K562 (cell line): ENCODE measurements at regions of chr1 and their contacts with region 1.

Region 1: DNA sequence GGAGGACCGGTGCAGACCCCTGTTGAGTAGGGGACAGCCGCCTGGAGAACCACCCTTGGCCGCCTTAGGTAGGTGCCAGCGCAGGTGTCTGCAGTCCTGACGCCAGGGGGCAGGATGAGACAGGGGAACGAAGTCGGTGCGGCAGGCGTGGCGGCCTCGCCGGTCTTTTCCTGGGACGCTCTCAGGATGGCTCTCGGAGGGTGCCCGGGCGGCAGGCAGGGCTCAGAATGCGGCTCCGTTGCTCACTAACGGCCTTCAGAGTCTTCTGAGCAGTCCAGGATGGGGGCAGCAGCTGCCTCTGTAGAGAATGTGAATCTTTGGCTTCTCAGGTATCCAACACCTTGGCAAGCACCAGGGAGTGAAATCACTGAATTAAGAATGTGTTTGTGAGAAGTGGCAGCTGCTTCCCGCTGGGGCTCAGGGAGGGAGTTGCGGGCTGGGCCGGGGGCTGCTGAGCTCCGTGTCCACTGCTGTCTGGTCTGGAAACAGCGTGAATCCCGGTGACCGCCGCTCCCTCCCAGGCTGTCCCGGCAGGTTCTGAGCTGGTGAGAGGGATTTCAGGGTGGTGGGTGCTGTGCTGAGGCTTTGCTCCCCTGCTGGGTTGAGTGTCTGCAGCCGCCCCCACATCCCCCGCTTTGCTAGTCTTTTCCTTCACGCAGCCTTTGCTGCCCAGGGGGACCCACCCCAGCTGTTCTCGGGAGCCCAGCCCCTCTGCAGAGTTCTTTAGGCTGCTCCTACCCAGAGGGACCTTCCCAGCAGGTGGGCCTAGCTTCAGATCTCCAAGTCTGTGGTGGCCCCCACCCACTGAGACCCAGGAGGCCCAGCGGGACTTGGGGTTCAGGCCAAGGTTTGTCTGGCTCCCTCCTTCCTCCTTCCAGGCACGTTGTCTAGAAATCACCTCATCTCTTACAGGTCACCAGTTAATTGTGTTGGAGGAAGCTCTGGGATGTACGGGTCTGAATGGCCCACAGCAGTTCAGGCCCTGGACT is 11.1 kb upstream of the C1orf174 start:
- DNase-seq: peak; percentile 84 to 85 (median 84)
- ATAC-seq: peak; percentile 87
- H3K4me3 ChIP-seq: no peak overlapping the region
- H3K27ac ChIP-seq: no peak overlapping the region
- H3K4me1 ChIP-seq: peaks cover 10 to 64% of the 10 kb centered on the region in 2 experiments; a peak in 3 of 5 replicates
- H3K27me3 ChIP-seq: peaks cover 13 to 42% of the 10 kb centered on the region in 2 experiments
- CTCF ChIP-seq: peak; percentile 88 to 94 (median 90)
- EP300 ChIP-seq: no peak
- POLR2A ChIP-seq: no peak
- RAD21 ChIP-seq: peak; percentile 70 to 94

Region 2: GRCh38 chr1:3785456-3786157 is 125.5 kb before region 1 on chr1:
- CTCF ChIA-PET with region 1: interaction called, 7 read pairs
- POLR2A ChIA-PET with region 1: interaction called, 3 read pairs
- in situ Hi-C with region 1: no loop called
- intact Hi-C with region 1: loop called (anchors 1 kb)
- DNase-seq: peak; percentile 65 to 74 (median 70)
- ATAC-seq: peak; percentile 91
- H3K4me3 ChIP-seq: no peak overlapping the region
- H3K27ac ChIP-seq: no peak overlapping the region
- H3K4me1 ChIP-seq: peaks cover 0 to 36% of the 10 kb centered on the region in 2 experiments; a peak in 2 of 5 replicates
- H3K27me3 ChIP-seq: no peaks in the 10 kb centered on the region
- CTCF ChIP-seq: peak; percentile 88 to 96 (median 91)
- EP300 ChIP-seq: no peak
- POLR2A ChIP-seq: no peak
- RAD21 ChIP-seq: peak; percentile 64 to 87

Region 3: DNA sequence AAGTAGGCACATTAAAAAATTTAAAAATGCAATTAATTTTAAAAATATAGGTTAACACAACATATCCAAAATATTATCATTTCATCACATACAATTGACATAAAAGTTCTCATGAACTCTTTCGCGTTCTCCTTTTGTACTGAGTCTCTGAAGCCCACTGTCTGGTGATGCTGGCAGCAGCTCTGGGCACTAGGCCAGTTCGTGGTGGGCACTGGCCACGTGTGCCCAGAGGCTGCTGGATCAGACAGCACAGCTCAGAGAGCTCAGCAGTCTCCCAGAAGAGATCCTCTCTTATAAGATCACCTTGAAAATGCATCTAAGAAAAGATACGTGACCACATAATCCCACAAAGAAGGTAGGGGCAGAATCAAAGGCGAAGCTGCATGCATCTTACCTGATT is 64.1 kb before region 1 on chr1:
- CTCF ChIA-PET with region 1: no interaction called
- POLR2A ChIA-PET with region 1: no interaction called
- in situ Hi-C with region 1: no loop called
- intact Hi-C with region 1: no loop called
- DNase-seq: no peak
- ATAC-seq: no peak
- H3K4me3 ChIP-seq: no peak overlapping the region
- H3K27ac ChIP-seq: no peak overlapping the region
- H3K4me1 ChIP-seq: no peaks in the 10 kb centered on the region
- H3K27me3 ChIP-seq: no peaks in the 10 kb centered on the region
- CTCF ChIP-seq: no peak
- EP300 ChIP-seq: no peak
- POLR2A ChIP-seq: no peak
- RAD21 ChIP-seq: no peak

Region 4: DNA sequence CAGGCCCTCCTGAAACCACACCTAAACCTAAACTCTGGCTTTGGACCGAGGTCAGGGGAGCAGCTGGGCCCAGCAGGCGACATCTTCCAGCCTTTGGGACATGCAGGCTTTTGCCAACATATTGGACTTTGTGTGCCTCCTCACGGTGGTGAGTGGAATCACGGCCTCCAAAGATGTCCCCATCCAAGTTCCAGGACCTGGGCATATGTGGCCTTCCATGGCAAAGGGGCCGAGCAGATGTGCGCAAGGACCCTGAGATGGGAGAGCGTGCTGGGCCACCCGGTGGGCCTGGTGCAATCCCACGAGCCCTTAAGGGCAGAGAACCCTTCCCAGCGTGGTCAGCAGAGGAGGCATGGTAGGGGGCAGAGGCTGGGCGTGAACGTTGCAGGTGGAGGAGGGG is 149.7 kb after region 1 on chr1:
- CTCF ChIA-PET with region 1: interaction called, 3 read pairs
- POLR2A ChIA-PET with region 1: no interaction called
- in situ Hi-C with region 1: no loop called
- intact Hi-C with region 1: loop called (anchors 5 kb)
- DNase-seq: peak in 1 of 4 experiments; percentile 11
- ATAC-seq: peak; percentile 69
- H3K4me3 ChIP-seq: no peak overlapping the region
- H3K27ac ChIP-seq: no peak overlapping the region
- H3K4me1 ChIP-seq: peaks cover 0 to 4% of the 10 kb centered on the region in 2 experiments; a peak in 1 of 5 replicates
- H3K27me3 ChIP-seq: peaks cover 16 to 57% of the 10 kb centered on the region in 2 experiments; a peak in 3 of 5 replicates
- CTCF ChIP-seq: peak; percentile 34 to 49 (median 36); a peak in 4 of 6 replicates
- EP300 ChIP-seq: no peak
- POLR2A ChIP-seq: no peak
- RAD21 ChIP-seq: peak in 1 of 2 experiments; percentile 57; a peak in 2 of 4 replicates

Region 5: GRCh38 chr1:4561205-4561604 is 650.1 kb after region 1 on chr1:
- CTCF ChIA-PET with region 1: no interaction called
- POLR2A ChIA-PET with region 1: no interaction called
- in situ Hi-C with region 1: no loop called
- intact Hi-C with region 1: no loop called
- DNase-seq: no peak
- ATAC-seq: no peak
- H3K4me3 ChIP-seq: no peak overlapping the region
- H3K27ac ChIP-seq: no peak overlapping the region
- H3K4me1 ChIP-seq: no peaks in the 10 kb centered on the region
- H3K27me3 ChIP-seq: no peaks in the 10 kb centered on the region
- CTCF ChIP-seq: no peak
- EP300 ChIP-seq: no peak
- POLR2A ChIP-seq: no peak
- RAD21 ChIP-seq: no peak

Region 6: DNA sequence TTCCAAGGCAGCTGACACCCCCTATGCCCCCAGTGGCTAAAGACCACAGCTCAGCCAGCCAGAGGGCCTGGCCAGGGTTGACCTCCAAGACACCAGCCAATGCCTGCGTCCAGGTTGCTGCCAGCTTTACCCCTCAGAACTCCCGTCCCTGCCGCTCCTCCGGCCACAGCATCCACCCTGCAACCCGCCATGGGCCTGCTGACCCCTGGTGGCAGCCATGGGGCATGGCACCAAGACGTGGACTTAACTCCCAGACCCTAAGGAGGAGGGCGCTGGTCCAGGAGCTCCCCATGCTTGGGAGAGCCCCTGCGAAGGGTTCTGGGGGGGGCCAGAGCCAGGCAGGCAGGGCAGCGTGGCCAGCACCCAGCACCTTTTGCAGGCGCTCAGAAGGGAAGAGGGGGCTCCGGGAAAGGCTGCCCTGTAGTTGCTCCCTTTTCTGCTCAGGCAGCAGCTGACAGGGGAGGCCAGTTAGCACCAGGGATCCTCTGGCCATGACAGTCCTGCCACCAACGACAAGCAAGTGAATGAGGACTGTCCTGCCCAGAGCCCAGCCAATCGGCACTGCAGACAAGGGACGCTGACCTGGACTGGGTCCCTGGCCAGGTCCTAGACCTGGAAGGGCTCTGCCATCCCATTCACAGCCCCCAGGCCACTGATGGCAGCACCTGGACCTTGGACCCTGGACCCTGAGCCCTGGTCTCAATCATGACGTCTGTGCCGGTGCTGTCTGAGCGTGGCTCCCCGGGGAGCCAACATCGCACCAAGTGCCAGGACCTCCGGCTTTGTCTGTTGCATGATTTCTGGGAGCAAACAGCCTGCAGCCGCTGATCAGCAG is 1834.8 kb after region 1 on chr1:
- CTCF ChIA-PET with region 1: no interaction called
- POLR2A ChIA-PET with region 1: no interaction called
- in situ Hi-C with region 1: no loop called
- intact Hi-C with region 1: loop called (anchors 10 kb)
- DNase-seq: peak; percentile 81 to 93 (median 92)
- ATAC-seq: peak; percentile 98
- H3K4me3 ChIP-seq: no peak overlapping the region
- H3K27ac ChIP-seq: no peak overlapping the region
- H3K4me1 ChIP-seq: peaks cover 0 to 17% of the 10 kb centered on the region in 2 experiments; a peak in 1 of 5 replicates
- H3K27me3 ChIP-seq: peaks cover 5 to 46% of the 10 kb centered on the region in 2 experiments; a peak in 3 of 5 replicates
- CTCF ChIP-seq: peak; percentile 97 to 98 (median 98)
- EP300 ChIP-seq: no peak
- POLR2A ChIP-seq: no peak
- RAD21 ChIP-seq: peak; percentile 74 to 94